CD8-positive, alpha-beta T cell (primary cell): ENCODE measurements at regions of chr9 and their contacts with region 1.

Region 1: GRCh38 chr9:113410207-113410864 is at the starts of genes C9orf43 and POLE3:
- DNase-seq: peak; percentile 90 to 97 (median 94)
- ATAC-seq: peak; percentile 88
- H3K4me3 ChIP-seq: peak within 1 kb of the TSS; percentile 88 to 94
- H3K4me3 Mint-ChIP-seq: peak within 1 kb of the TSS; percentile 99
- H3K27ac ChIP-seq: peak within 1 kb of the TSS; percentile 84 to 99
- H3K27ac Mint-ChIP-seq: peak within 1 kb of the TSS; percentile 99
- H3K4me1 ChIP-seq: peaks cover 22% of the 10 kb centered on the region
- H3K4me1 Mint-ChIP-seq: peaks cover 29% of the 10 kb centered on the region
- H3K27me3 ChIP-seq: no peaks in the 10 kb centered on the region
- H3K27me3 Mint-ChIP-seq: no peaks in the 10 kb centered on the region
- CTCF ChIP-seq: no peak
- total RNA-seq, gene C9orf43: 0.61 to 0.73 TPM
- total RNA-seq, gene POLE3: 77.4 to 79.3 TPM

Region 2: GRCh38 chr9:111582888-111583287 is 1827.4 kb before region 1 on chr9:
- CTCF ChIA-PET with region 1: no interaction called
- POLR2A ChIA-PET with region 1: no interaction called
- intact Hi-C with region 1: no loop called
- DNase-seq: no peak
- ATAC-seq: no peak
- H3K4me3 ChIP-seq: no peak overlapping the region
- H3K4me3 Mint-ChIP-seq: no peak overlapping the region
- H3K27ac ChIP-seq: no peak overlapping the region
- H3K27ac Mint-ChIP-seq: no peak overlapping the region
- H3K4me1 ChIP-seq: no peaks in the 10 kb centered on the region
- H3K4me1 Mint-ChIP-seq: no peaks in the 10 kb centered on the region
- H3K27me3 ChIP-seq: peaks cover 0 to 1% of the 10 kb centered on the region in 2 experiments
- H3K27me3 Mint-ChIP-seq: peaks cover 1% of the 10 kb centered on the region
- CTCF ChIP-seq: no peak

Region 3: DNA sequence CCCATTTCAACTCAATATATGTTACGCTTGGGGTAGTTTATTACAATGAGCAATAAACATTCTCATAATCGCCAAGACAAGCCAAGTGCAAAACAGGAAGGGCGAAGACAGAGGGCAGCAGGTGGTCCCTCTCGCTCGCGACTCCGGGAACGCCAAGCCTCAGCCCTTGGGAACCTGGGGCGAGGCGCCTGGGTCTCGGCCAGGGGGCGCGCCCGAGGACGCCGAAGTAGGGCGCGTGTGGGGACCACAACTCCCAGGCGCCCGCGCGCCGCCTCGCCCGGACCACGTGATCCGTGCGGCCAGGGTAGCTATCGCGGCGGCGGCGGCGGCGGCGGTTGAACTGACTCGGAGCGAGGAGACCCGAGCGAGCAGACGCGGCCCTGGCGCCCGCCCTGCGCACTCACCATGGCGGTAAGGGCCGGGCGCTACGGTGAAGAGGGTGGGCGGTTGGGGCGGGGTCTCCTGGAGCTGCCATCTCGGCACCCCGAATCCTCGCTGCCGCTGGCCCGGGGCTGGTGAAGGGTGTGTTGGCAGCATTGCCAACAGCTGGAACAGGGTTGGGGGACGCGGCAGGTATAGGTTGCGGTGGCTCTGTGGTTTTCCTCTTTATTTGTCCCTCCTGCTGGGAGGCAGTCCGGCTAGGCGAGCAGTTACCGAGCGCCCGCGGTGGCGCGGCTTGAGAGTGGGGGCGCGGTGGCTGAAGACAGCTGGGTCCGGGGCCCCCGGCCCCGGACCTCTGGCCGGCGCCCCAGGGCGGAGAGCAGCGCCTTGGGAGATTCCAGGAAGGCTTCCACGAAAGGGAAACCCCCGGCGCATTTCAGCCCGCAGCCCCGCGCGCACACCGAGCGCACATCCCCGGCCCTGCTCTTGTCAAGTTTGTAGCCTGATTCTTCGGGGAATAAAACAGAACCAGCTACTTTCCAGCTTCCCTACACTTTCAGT is 259.4 kb before region 1 on chr9 and contains the start of gene SLC31A2:
- CTCF ChIA-PET with region 1: no interaction called
- POLR2A ChIA-PET with region 1: no interaction called
- intact Hi-C with region 1: loop called (anchors 2 kb)
- DNase-seq: peak; percentile 61 to 91 (median 85)
- ATAC-seq: peak; percentile 94
- H3K4me3 ChIP-seq: peak within 1 kb of the TSS; percentile 83 to 88
- H3K4me3 Mint-ChIP-seq: peak within 1 kb of the TSS; percentile 83
- H3K27ac ChIP-seq: peak within 1 kb of the TSS; percentile 38 to 52
- H3K27ac Mint-ChIP-seq: peak within 1 kb of the TSS; percentile 41
- H3K4me1 ChIP-seq: peaks cover 20% of the 10 kb centered on the region
- H3K4me1 Mint-ChIP-seq: peaks cover 35% of the 10 kb centered on the region
- H3K27me3 ChIP-seq: no peaks in the 10 kb centered on the region
- H3K27me3 Mint-ChIP-seq: no peaks in the 10 kb centered on the region
- CTCF ChIP-seq: peak; percentile 33
- total RNA-seq, gene SLC31A2: 5.4 to 6.0 TPM

Region 4: GRCh38 chr9:113309204-113309813 is 101.0 kb before region 1 on chr9:
- CTCF ChIA-PET with region 1: interaction called, 3 read pairs
- POLR2A ChIA-PET with region 1: no interaction called
- intact Hi-C with region 1: loop called in 1 of 2 experiments (anchors 1 kb)
- DNase-seq: peak in 5 of 9 experiments; percentile 13 to 60 (median 30)
- ATAC-seq: peak; percentile 58
- H3K4me3 ChIP-seq: no peak overlapping the region
- H3K4me3 Mint-ChIP-seq: no peak overlapping the region
- H3K27ac ChIP-seq: no peak overlapping the region
- H3K27ac Mint-ChIP-seq: no peak overlapping the region
- H3K4me1 ChIP-seq: no peaks in the 10 kb centered on the region
- H3K4me1 Mint-ChIP-seq: no peaks in the 10 kb centered on the region
- H3K27me3 ChIP-seq: no peaks in the 10 kb centered on the region
- H3K27me3 Mint-ChIP-seq: peaks cover 7% of the 10 kb centered on the region
- CTCF ChIP-seq: peak; percentile 65

Region 5: DNA sequence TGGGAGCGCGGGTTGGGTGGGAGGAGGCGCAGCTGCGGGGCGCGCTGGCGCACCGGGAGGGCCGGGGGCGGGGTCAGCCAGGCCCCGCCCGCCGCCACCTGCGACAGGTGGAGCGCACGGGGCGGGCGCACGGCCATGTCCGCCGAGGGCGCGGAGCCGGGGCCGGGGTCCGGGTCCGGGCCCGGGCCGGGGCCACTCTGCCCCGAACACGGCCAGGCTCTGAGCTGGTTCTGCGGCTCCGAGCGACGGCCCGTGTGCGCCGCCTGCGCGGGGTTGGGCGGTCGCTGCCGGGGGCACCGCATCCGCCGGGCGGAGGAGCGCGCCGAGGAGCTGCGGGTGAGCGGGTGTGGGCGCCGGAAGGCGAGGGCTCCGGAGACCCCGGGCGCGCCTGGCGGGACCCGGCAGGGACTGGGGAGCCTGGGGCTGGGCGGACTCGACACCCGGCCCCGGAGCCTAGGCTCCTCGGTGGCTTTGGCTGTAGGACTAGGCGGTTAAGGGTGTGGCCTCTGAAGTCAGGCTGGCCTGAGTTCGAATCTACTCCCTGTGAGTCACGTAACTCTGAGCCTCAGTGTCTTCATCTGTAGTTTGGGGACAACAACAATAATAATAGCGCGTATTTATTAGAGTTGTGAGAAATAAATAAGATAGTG is 60.8 kb before region 1 on chr9 and contains the start of gene BSPRY:
- CTCF ChIA-PET with region 1: no interaction called
- POLR2A ChIA-PET with region 1: interaction called, 10 read pairs
- intact Hi-C with region 1: no loop called
- DNase-seq: peak in 6 of 9 experiments; percentile 26 to 61 (median 46)
- ATAC-seq: peak; percentile 72
- H3K4me3 ChIP-seq: peak within 1 kb of the TSS; percentile 22 to 36
- H3K4me3 Mint-ChIP-seq: peak within 1 kb of the TSS; percentile 78
- H3K27ac ChIP-seq: no peak within 1 kb of the TSS
- H3K27ac Mint-ChIP-seq: no peak within 1 kb of the TSS
- H3K4me1 ChIP-seq: peaks cover 17% of the 10 kb centered on the region
- H3K4me1 Mint-ChIP-seq: peaks cover 20% of the 10 kb centered on the region
- H3K27me3 ChIP-seq: no peaks in the 10 kb centered on the region
- H3K27me3 Mint-ChIP-seq: peaks cover 31% of the 10 kb centered on the region
- CTCF ChIP-seq: no peak
- total RNA-seq, gene BSPRY: not detected

Region 6: DNA sequence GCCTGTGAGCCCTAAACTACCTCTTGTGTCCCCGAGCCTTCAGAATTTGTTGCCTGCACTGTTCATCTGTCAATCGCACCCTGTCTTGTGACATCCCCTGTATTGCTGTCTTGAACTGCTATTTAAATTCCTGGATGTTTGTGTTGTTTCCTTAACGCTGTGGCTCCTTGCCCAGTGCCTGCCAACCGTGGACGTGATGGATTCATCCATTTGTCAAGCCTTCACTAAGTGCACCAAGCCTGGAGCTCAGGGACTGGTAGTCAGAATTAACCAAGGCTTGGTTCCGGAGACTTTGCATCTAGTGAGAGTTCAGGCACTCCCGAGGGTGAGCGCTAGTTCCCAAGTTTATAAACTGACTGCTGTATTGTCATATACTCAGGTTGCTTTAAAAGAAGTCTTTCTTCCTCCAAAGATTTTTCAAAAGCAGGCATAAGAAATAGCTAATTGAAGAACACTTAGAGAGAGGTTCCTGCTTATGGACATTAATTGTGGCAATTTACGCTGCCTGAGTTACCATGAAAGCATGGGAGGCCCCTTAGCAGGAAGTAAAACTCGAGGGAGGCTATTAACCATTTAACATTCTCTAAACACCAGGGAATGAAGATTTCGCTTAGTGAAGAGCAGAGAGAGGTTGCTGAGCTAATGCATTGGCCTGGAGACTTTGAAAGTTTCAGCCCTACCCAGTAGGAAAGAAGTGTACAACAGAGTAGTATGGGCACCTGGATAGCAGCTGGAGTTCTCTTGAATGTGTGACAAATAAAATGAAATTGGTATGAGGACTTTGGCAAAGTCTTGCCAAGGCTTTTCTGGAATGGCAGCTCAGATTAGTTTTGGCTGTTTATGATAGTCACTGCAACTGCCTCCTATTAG is 82.2 kb after region 1 on chr9:
- CTCF ChIA-PET with region 1: no interaction called
- POLR2A ChIA-PET with region 1: no interaction called
- intact Hi-C with region 1: no loop called
- DNase-seq: no peak
- ATAC-seq: no peak
- H3K4me3 ChIP-seq: no peak overlapping the region
- H3K4me3 Mint-ChIP-seq: no peak overlapping the region
- H3K27ac ChIP-seq: no peak overlapping the region
- H3K27ac Mint-ChIP-seq: no peak overlapping the region
- H3K4me1 ChIP-seq: no peaks in the 10 kb centered on the region
- H3K4me1 Mint-ChIP-seq: peaks cover 10% of the 10 kb centered on the region
- H3K27me3 ChIP-seq: no peaks in the 10 kb centered on the region
- H3K27me3 Mint-ChIP-seq: no peaks in the 10 kb centered on the region
- CTCF ChIP-seq: no peak

Region 7: DNA sequence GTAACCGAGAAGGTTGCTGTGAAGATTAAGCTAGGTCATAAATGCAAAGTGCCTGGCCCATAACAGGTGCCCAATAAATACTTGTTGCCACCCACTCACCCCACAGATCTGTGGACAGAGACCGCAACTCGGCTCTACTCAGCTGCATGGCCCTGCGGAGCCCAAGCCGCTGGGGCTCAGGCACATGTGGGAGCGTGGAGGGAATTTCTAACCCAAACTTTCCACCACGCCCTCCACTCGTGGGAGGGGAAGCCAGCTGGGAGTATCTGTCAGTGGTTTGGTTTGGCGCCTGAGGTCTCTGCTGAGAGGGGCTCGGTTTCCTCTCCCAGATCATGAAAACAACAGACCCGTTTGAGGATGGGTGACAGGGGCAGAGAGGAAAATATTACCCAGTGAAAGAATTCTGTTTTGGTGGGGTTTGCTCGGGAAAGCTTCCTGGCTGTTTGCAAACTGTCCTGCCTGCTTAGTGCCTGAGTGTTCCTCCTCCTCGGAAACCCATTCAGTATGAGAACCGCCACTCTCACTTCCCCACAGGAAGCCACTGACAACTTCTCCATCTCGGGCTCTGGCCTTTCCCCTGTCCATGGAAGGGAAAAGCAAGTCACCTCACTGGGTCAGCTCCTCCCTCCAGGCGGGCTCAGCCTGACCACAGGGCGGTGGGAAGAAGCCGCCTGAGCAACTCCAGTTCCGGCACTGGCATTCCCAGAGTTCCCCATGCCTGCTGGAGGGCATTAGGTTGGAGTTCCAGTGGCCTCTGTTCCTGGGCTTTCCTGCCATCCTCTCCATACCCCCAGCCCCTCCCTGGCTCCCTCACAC is 113.3 kb after region 1 on chr9:
- CTCF ChIA-PET with region 1: no interaction called
- POLR2A ChIA-PET with region 1: interaction called, 9 read pairs
- intact Hi-C with region 1: loop called (anchors 2 kb)
- DNase-seq: peak in 8 of 9 experiments; percentile 46 to 87 (median 66)
- ATAC-seq: peak; percentile 27
- H3K4me3 ChIP-seq: peak overlapping the region; percentile 31 to 40
- H3K4me3 Mint-ChIP-seq: peak overlapping the region; percentile 80
- H3K27ac ChIP-seq: peak overlapping the region; percentile 19 to 78
- H3K27ac Mint-ChIP-seq: peak overlapping the region; percentile 94
- H3K4me1 ChIP-seq: peaks cover 97% of the 10 kb centered on the region
- H3K4me1 Mint-ChIP-seq: peaks cover 92% of the 10 kb centered on the region
- H3K27me3 ChIP-seq: no peaks in the 10 kb centered on the region
- H3K27me3 Mint-ChIP-seq: no peaks in the 10 kb centered on the region
- CTCF ChIP-seq: no peak